ENCODE measurements at regions of chr14 and their contacts with region 1.

Region 1: DNA sequence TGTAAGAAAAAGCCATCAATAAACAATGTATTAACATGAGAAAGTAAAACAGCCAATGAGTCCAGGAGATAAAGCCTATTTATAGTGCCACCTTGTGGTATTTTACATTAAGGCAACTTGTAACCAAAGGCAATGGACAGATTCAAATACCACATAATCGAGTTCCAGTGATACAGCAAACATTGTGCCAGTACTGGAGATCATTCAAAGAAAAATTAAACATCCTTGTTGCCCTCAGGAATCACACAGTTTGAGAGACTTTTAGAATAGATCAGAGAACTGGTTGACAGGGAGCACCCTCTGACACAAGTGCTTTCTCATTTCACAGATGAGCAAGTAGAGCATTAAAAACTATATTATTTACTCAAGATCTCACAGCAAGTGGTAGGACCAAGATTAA is 98.1 kb downstream of the DDHD1 start:
- DNase-seq: no peak
- H3K4me3 ChIP-seq: no peak overlapping the region
- H3K27ac ChIP-seq: no peak overlapping the region
- H3K4me1 ChIP-seq: no peaks in the 10 kb centered on the region
- H3K27me3 ChIP-seq: no peaks in the 10 kb centered on the region
- CTCF ChIP-seq: peak; percentile 58 to 70 (median 66)
- EP300 ChIP-seq: no peak
- POLR2A ChIP-seq: no peak

Region 2: DNA sequence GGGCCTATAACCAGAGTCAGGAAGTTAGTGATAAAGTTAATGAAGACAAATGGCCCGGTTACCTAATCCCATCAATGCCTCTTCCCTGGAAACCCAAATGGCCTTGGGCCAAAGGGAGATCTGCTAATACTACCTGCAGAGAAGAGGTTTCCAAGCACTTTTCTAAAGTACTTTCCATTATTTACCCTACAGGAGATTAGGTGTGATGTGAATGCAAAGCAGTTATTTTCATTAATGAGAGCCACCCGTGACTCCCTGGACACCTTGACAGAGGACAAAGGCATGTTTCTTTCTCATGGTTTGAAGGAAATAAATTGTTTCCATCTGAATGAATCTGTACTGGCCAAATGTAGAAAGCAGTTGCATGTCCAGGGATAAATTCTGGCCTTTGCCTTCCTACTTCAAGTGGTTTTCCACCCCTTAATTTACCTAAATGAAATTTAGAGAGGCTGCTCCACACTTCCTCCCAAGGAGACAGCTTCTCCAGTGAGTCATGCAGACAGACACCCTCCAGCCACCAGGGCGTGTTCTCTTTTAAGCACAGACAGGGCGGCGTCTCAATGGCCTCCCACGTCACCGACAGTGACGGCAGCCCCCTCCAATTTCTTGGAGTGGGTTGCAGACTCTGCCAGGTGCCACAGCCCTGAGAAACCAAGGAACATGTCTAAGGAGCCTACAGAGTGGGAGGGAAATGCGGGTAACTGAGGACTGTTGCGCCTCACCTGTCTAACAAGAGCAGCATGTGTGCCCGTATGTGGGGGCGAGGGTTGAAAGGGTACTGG is 219.7 kb before region 1 on chr14:
- in situ Hi-C with region 1: loop called in 1 of 4 experiments (anchors 25 kb)
- intact Hi-C with region 1: no loop called
- DNase-seq: no peak
- H3K4me3 ChIP-seq: no peak overlapping the region
- H3K27ac ChIP-seq: no peak overlapping the region
- H3K4me1 ChIP-seq: no peaks in the 10 kb centered on the region
- H3K27me3 ChIP-seq: no peaks in the 10 kb centered on the region
- CTCF ChIP-seq: no peak
- EP300 ChIP-seq: no peak
- POLR2A ChIP-seq: no peak

Region 3: DNA sequence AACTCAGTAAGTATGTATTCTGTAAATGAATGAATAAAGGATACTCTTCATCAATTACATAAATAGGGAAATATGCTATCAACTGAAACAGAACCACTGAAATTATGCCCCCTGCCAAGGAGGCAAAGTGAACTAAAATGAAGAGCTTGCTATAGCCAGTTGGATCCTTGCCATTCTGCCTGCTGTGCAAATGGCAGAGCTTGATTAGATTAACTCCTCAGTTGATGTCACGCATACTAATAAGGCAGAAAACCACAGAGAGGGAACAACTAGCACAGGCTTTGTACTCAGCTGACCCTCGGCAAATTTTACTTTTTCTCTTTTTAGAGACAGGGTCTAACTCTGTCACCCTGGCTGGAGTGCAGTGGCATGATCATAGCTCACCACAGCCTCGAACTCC is 67.5 kb before region 1 on chr14:
- in situ Hi-C with region 1: no loop called
- intact Hi-C with region 1: no loop called
- DNase-seq: no peak
- H3K4me3 ChIP-seq: no peak overlapping the region
- H3K27ac ChIP-seq: no peak overlapping the region
- H3K4me1 ChIP-seq: no peaks in the 10 kb centered on the region
- H3K27me3 ChIP-seq: no peaks in the 10 kb centered on the region
- CTCF ChIP-seq: no peak
- EP300 ChIP-seq: no peak
- POLR2A ChIP-seq: no peak

Region 4: DNA sequence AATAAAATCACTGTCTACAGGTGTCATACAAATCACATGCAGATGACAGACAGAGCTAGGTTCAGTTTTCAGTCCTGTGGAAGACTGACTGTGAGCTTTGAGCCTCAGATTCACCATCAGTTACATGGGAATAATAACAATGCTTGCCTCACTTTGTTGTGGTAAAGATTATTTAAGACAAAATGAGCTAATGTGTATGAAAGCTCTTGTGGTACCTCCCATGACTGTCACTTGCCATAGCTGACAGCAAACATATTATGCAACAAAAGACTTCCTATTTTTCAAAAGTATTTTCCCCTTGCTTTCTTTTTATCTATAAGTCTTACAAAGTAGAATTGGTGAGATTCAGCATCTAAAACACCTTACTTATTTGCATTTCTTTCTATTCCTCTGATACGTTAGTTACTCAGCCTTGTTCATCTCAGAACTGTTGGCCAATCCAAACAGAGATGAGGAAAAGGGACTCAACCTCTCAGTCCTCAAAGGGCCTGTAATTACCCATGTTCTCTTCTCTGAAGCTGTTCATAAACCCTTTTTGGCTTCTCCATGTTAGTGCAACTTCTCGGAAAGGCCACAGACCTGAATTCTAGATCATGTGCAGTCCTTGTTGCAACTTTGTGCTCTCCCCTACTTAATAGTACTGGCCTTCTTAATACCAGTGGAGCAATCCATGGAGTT is 106.9 kb after region 1 on chr14:
- in situ Hi-C with region 1: no loop called
- intact Hi-C with region 1: no loop called
- DNase-seq: no peak
- H3K4me3 ChIP-seq: no peak overlapping the region
- H3K27ac ChIP-seq: no peak overlapping the region
- H3K4me1 ChIP-seq: no peaks in the 10 kb centered on the region
- H3K27me3 ChIP-seq: no peaks in the 10 kb centered on the region
- CTCF ChIP-seq: no peak
- EP300 ChIP-seq: no peak
- POLR2A ChIP-seq: no peak